Panc1 (cell line): ENCODE measurements at regions of chr11 and their contacts with region 1.

Region 1: GRCh38 chr11:84261707-84262106 is 975.5 kb upstream of the CCDC90B start:
- DNase-seq: no peak
- ATAC-seq: no peak
- H3K4me3 ChIP-seq: no peak overlapping the region
- H3K27ac ChIP-seq: no peak overlapping the region
- H3K4me1 ChIP-seq: no peaks in the 10 kb centered on the region
- H3K27me3 ChIP-seq: no peaks in the 10 kb centered on the region
- CTCF ChIP-seq: peak; percentile 10; the same call in 1 of the 2 replicates

Region 2: DNA sequence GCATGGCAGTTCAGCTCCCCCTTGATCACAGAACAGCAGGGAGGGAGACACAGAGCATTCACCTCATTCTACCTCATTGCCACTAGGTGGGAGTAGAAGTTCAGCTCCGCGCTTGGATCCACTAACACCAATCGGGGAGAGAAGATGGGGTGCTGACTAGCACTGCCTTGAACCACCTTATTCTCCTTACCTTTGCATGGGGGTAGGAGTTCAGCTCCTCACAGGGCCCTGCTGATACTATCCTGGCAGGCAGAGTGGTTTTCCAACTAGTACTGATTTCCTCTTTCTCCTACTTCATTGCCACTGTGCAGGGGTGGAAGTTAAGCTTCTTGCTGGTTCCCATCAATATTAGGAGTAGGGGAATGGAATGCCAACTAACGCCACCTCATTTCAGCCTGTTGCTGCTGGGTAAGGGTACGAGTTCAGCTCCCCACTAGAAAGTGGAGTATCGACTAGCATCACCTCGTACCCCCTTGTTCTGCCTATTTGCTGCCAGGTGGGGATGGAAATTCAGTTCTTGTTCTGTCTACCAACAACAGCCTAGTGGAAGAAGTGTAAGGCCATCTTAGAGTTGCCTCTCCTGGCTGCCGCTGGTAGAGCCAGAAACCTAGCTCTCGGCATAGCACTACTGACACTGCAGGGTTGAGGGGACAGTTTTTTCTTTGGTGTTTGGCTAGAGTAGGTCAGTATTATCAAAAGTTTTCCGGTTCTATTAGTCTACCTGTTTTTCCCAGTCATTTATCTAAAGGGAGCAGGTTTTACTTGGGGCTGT is 424.6 kb before region 1 on chr11:
- CTCF ChIA-PET with region 1: no interaction called
- POLR2A ChIA-PET with region 1: no interaction called
- in situ Hi-C with region 1: no loop called
- intact Hi-C with region 1: loop called (anchors 2 kb)
- DNase-seq: peak; percentile 38
- ATAC-seq: peak; percentile 96
- H3K4me3 ChIP-seq: no peak overlapping the region
- H3K27ac ChIP-seq: no peak overlapping the region
- H3K4me1 ChIP-seq: no peaks in the 10 kb centered on the region
- H3K27me3 ChIP-seq: peaks cover 5% of the 10 kb centered on the region; the same call in 1 of the 2 replicates
- CTCF ChIP-seq: peak; percentile 90

Region 3: DNA sequence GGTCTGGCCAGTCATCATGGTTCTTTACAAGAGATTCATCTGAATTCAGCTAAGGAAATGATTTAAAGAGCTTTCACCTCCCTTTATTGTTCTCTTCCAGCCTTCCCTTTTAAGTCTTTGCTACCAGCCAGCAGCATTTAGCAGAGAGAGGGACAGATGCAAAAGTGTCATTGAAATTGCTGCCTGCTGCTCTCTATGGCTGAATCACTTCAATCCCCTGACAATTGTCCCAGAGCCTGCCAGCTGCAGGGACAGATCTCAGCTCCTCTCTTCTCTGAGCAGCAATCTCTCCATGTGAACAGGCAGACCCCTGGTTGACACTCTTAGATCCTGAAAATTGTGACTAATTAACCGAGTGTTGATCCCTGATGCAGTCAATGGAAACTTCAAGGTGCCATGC is 158.6 kb before region 1 on chr11:
- CTCF ChIA-PET with region 1: no interaction called
- POLR2A ChIA-PET with region 1: interaction called, 13 read pairs
- in situ Hi-C with region 1: no loop called
- intact Hi-C with region 1: no loop called
- DNase-seq: no peak
- ATAC-seq: no peak
- H3K4me3 ChIP-seq: no peak overlapping the region
- H3K27ac ChIP-seq: no peak overlapping the region
- H3K4me1 ChIP-seq: no peaks in the 10 kb centered on the region
- H3K27me3 ChIP-seq: no peaks in the 10 kb centered on the region
- CTCF ChIP-seq: no peak